ENCODE measurements at regions of chr2 and their contacts with region 1.

Region 1: GRCh38 chr2:2291500-2292260 is 39.4 kb downstream of the MYT1L start:
- DNase-seq: no peak
- H3K4me3 ChIP-seq: no peak overlapping the region
- H3K27ac ChIP-seq: no peak overlapping the region
- H3K4me1 ChIP-seq: no peaks in the 10 kb centered on the region
- H3K27me3 ChIP-seq: no peaks in the 10 kb centered on the region
- CTCF ChIP-seq: no peak
- EP300 ChIP-seq: no peak
- POLR2A ChIP-seq: no peak

Region 2: DNA sequence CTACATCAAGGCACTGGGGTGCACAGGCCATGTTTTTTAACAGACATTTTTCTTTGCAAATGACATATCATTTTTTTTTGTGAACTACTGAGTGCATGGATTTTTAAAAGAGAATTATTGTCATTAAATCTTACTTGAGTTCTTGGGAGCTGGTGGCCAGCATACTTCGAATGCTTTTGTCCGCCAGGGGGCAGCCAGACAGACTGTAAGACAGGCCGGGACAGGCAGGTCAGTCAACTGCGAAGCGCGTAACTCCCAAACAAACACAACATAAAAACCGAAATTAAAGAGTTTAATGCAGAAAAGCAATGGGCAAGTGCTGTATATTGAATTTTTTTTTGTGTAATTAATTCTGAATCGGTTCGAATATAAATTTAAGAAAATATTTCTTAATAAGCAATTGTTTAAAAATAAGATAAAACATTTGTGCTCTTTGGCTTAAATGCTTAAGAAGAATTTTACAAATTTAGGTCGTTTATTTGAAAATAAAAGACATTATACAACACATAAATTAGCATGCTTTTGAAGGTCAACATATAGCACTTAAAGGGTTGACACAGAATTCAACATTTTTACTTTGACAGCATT is 405.2 kb before region 1 on chr2:
- in situ Hi-C with region 1: loop called in 1 of 4 experiments (anchors 25 kb)
- intact Hi-C with region 1: no loop called
- DNase-seq: peak; percentile 57
- H3K4me3 ChIP-seq: no peak overlapping the region
- H3K27ac ChIP-seq: no peak overlapping the region
- H3K4me1 ChIP-seq: no peaks in the 10 kb centered on the region
- H3K27me3 ChIP-seq: no peaks in the 10 kb centered on the region
- CTCF ChIP-seq: peak; percentile 46 to 68 (median 54)
- EP300 ChIP-seq: no peak
- POLR2A ChIP-seq: no peak

Region 3: GRCh38 chr2:2127467-2127866 is 164.2 kb before region 1 on chr2:
- in situ Hi-C with region 1: no loop called
- intact Hi-C with region 1: loop called (anchors 5 kb)
- DNase-seq: no peak
- H3K4me3 ChIP-seq: no peak overlapping the region
- H3K27ac ChIP-seq: no peak overlapping the region
- H3K4me1 ChIP-seq: no peaks in the 10 kb centered on the region
- H3K27me3 ChIP-seq: no peaks in the 10 kb centered on the region
- CTCF ChIP-seq: no peak
- EP300 ChIP-seq: no peak
- POLR2A ChIP-seq: no peak

Region 4: DNA sequence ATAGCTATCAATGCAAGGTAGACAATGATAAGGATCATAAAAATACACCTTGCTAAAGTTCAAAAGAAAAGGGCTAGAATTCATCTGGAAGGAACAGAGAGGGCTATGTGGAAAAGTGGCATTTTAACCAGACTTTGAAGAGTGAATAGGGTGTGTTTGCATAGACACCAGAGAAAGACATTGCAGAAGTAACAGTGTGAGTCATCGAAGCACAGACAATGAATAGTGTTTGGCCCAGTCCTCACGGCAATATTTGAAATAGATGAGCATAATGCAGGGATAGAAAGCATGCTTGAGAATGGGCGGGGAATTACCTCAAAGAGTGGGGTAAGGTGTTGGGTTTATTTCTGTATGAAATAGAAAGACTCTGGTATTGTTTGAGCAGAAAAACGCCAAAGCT is 15.2 kb after region 1 on chr2:
- in situ Hi-C with region 1: no loop called
- intact Hi-C with region 1: loop called (anchors 2 kb)
- DNase-seq: no peak
- H3K4me3 ChIP-seq: no peak overlapping the region
- H3K27ac ChIP-seq: no peak overlapping the region
- H3K4me1 ChIP-seq: no peaks in the 10 kb centered on the region
- H3K27me3 ChIP-seq: no peaks in the 10 kb centered on the region
- CTCF ChIP-seq: no peak
- EP300 ChIP-seq: no peak
- POLR2A ChIP-seq: no peak

Region 5: GRCh38 chr2:2331881-2332280 is 40.2 kb after region 1 on chr2:
- in situ Hi-C with region 1: no loop called
- intact Hi-C with region 1: no loop called
- DNase-seq: no peak
- H3K4me3 ChIP-seq: no peak overlapping the region
- H3K27ac ChIP-seq: no peak overlapping the region
- H3K4me1 ChIP-seq: no peaks in the 10 kb centered on the region
- H3K27me3 ChIP-seq: no peaks in the 10 kb centered on the region
- CTCF ChIP-seq: no peak
- EP300 ChIP-seq: no peak
- POLR2A ChIP-seq: no peak